ENCODE measurements at regions of chr16 and their contacts with region 1.

Region 1: GRCh38 chr16:5401658-5402057 is 304.1 kb upstream of the EEF2KMT start:
- DNase-seq: no peak

Region 2: GRCh38 chr16:5228369-5228768 is 173.3 kb before region 1 on chr16:
- in situ Hi-C with region 1: no loop called
- DNase-seq: no peak

Region 3: GRCh38 chr16:5450409-5451104 is 48.9 kb after region 1 on chr16:
- in situ Hi-C with region 1: loop called (anchors 10 kb)
- DNase-seq: no peak

Measured in Caki2 (cell line).